ENCODE measurements at regions of chr12 and their contacts with region 1.

Region 1: GRCh38 chr12:1917172-1918065 is 1.0 kb downstream of the CACNA2D4 start:
- DNase-seq: no peak
- ATAC-seq: peak; percentile 64
- H3K4me3 Mint-ChIP-seq: peak overlapping the region; percentile 86
- H3K27ac Mint-ChIP-seq: peak overlapping the region; percentile 87
- H3K4me1 Mint-ChIP-seq: peaks cover 42% of the 10 kb centered on the region
- H3K27me3 Mint-ChIP-seq: peaks cover 9% of the 10 kb centered on the region
- CTCF ChIP-seq: no peak

Region 2: DNA sequence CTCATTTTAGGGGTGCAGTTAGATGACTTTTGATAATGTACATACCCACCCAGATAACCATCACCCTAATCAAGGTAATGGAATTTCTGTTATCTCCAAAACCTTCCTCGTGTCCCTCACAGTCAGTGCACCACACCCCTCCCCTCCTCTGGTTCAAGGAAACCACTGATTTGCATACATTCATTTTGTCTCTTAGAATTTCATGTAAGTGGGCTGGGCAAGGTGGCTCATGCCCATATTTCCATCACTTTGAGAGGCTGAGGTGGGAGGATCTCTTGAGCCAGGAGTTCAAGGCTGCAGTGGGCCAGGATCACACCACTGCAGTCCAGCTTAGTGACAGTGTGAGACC is 210.8 kb before region 1 on chr12:
- CTCF ChIA-PET with region 1: no interaction called
- POLR2A ChIA-PET with region 1: no interaction called
- intact Hi-C with region 1: no loop called
- DNase-seq: no peak
- ATAC-seq: no peak
- H3K4me3 Mint-ChIP-seq: no peak overlapping the region
- H3K27ac Mint-ChIP-seq: no peak overlapping the region
- H3K4me1 Mint-ChIP-seq: peaks cover 58% of the 10 kb centered on the region
- H3K27me3 Mint-ChIP-seq: no peaks in the 10 kb centered on the region
- CTCF ChIP-seq: no peak

Region 3: DNA sequence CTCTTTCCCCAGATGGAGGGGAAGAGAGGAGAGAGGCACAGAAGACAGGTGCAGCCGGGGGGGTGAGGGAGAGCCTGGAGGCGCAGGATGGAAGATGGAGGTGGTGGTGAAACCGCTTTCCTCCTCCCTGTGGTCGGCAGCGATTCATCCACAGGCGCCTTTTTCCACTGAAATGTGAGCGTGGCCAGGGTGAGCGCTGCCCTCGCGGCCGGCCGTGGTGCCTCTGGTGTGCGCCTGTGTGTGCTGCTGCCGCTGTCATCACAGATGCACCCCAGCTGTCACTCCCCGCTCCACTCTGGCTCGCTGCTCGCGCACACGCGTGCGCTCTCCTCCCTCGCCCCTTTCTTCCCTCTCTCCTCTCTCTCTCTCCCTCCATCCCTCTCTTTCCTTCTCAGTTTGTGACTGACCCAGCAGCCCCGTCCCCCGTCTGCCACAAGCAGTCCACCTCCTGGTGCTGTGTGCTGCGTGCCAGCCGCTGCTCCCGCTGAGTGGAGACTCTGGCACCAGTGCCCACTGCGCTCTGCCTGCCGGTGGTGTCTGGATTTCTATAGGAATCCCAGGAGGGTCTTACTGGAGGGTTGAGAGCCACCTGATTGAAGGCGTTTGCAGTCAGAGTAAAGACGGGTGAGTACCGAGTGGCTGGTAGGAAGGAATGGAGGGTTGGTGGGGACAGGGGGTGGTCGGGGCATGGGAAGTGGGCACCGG is 97.1 kb before region 1 on chr12 and contains the start of gene LRTM2:
- CTCF ChIA-PET with region 1: no interaction called
- POLR2A ChIA-PET with region 1: no interaction called
- intact Hi-C with region 1: no loop called
- DNase-seq: no peak
- ATAC-seq: no peak
- H3K4me3 Mint-ChIP-seq: no peak within 1 kb of the TSS
- H3K27ac Mint-ChIP-seq: no peak within 1 kb of the TSS
- H3K4me1 Mint-ChIP-seq: no peaks in the 10 kb centered on the region
- H3K27me3 Mint-ChIP-seq: peaks cover 40% of the 10 kb centered on the region
- CTCF ChIP-seq: no peak
- total RNA-seq, gene LRTM2: not detected in 2 replicates

Region 4: DNA sequence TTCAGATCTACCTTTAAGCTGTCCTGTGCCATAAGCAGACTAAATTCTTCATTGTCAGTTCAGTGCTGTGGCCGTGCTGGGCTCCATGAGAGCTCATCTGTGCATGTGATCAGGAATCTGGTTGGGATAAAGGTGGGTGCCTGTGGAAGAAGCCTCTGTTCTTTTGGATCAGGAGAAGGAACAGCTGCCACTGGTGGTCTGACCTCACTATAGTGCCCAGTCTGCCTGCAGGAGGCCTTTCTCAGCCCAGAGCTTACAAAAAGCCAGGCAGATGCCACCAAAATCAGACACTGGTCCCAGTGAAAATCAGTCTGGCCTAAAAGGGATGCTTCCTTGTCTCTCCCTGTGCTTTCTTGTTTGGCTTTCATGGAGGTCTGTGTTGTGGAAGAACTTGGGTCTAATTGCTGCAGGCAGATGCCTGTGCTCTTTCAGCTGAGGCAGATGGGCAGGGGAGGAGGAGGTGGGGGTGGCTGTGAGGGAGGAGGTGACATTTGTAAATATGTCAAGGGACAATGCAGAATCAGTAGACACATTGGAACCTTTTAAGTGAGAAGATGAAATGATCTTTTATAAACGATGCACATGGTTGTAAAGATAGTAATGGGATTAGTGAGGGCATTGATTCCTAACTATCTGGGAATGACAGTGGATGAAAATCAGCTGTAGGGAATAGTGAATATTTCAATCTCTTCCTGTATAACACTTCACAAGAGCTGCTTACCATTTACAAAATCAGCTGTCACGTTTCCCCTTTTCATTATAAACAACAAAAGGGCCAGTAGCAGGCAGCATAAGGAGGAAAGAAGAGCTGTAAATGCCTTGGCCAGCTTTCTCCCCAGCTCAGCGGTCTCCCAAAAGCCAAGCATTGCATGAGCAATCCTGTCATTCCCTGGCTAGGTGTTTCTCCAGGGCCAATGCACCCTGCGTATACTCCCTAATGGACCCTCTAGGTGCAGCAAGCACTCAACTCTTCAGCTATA is 43.6 kb before region 1 on chr12:
- CTCF ChIA-PET with region 1: no interaction called
- POLR2A ChIA-PET with region 1: no interaction called
- intact Hi-C with region 1: loop called (anchors 10 kb)
- DNase-seq: no peak
- ATAC-seq: no peak
- H3K4me3 Mint-ChIP-seq: no peak overlapping the region
- H3K27ac Mint-ChIP-seq: no peak overlapping the region
- H3K4me1 Mint-ChIP-seq: no peaks in the 10 kb centered on the region
- H3K27me3 Mint-ChIP-seq: peaks cover 18% of the 10 kb centered on the region
- CTCF ChIP-seq: no peak

Region 5: GRCh38 chr12:1932264-1932777 is 14.9 kb after region 1 on chr12:
- CTCF ChIA-PET with region 1: no interaction called
- POLR2A ChIA-PET with region 1: interaction called, 7 read pairs
- intact Hi-C with region 1: loop called (anchors 2 kb)
- DNase-seq: no peak
- ATAC-seq: peak; percentile 40
- H3K4me3 Mint-ChIP-seq: peak overlapping the region; percentile 60
- H3K27ac Mint-ChIP-seq: no peak overlapping the region
- H3K4me1 Mint-ChIP-seq: peaks cover 54% of the 10 kb centered on the region
- H3K27me3 Mint-ChIP-seq: no peaks in the 10 kb centered on the region
- CTCF ChIP-seq: no peak

Measured in activated B cell treated with CpG ODN at 0.5 μM for 24 hours (primary cell).